ENCODE measurements at regions of chr16 and their contacts with region 1.

Region 1: GRCh38 chr16:70653809-70654771 is 7.7 kb downstream of the IL34 start:
- DNase-seq: peak; percentile 87
- H3K4me3 Mint-ChIP-seq: peak overlapping the region; percentile 54
- H3K27ac Mint-ChIP-seq: no peak overlapping the region
- H3K4me1 Mint-ChIP-seq: peaks cover 16% of the 10 kb centered on the region
- H3K27me3 Mint-ChIP-seq: no peaks in the 10 kb centered on the region
- CTCF ChIP-seq: peak; percentile 89

Region 2: GRCh38 chr16:68834550-68834949 is 1819.5 kb before region 1 on chr16:
- CTCF ChIA-PET with region 1: no interaction called
- intact Hi-C with region 1: no loop called
- DNase-seq: no peak
- H3K4me3 Mint-ChIP-seq: no peak overlapping the region
- H3K27ac Mint-ChIP-seq: no peak overlapping the region
- H3K4me1 Mint-ChIP-seq: no peaks in the 10 kb centered on the region
- H3K27me3 Mint-ChIP-seq: no peaks in the 10 kb centered on the region
- CTCF ChIP-seq: no peak

Region 3: DNA sequence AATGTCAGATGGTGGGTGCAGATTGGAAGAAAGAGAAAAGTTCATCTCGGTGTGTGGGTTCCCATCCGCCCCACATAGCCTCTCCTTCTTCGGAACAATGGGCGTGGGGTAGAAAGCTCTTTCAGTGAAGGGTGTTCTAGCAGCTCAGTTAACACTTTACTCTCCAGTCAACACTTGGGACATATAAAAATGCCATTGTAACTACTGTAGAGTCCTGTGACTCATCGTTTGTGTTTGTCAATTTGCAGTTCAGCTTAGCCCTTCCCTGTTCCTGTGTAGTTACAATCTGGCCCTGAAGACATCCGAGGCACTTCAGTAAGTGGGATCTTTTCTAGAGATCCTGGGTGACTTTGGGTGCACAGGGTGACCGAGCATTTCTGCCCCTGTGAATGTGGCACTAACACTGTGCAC is 492.0 kb before region 1 on chr16:
- CTCF ChIA-PET with region 1: no interaction called
- intact Hi-C with region 1: loop called (anchors 10 kb)
- DNase-seq: no peak
- H3K4me3 Mint-ChIP-seq: no peak overlapping the region
- H3K27ac Mint-ChIP-seq: no peak overlapping the region
- H3K4me1 Mint-ChIP-seq: peaks cover 9% of the 10 kb centered on the region
- H3K27me3 Mint-ChIP-seq: no peaks in the 10 kb centered on the region
- CTCF ChIP-seq: no peak

Region 4: DNA sequence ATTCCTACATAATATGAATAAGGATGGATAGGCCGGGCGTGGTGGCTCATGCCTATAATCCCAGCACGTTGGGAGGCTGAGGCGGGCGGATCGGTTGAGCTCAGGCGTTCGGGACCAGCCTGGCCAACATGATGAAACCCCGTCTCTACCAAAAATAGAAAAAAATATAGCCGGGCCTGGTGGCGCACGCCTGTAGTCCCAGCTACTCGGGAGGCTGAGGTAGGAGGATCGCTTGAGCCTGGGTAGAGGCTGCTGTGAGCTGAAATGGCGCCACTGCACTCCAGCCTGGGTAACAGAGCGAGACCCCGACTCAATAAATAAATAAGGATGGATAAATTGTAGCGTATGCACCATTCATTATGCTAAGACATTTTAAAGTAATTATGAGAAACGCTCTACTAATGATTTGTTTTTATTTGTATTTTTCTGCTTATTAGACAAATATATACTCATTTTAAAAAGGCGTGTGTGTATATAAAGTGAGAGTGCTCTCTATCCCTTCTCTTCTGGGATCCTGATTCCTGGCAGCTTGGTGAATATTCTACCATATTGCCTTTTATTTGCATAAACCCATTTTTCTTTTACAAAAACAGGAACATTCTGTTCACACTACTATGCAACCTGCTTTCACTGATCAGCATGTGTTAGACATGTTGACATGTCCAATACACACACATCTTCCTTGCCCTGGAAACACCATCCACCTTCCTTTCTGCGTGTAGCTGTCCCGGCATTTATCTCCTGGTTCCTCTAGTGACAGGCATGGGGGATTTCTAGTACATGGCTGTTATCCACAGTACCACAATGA is 281.0 kb before region 1 on chr16:
- CTCF ChIA-PET with region 1: interaction called, 3 read pairs
- intact Hi-C with region 1: loop called (anchors 5 kb)
- DNase-seq: no peak
- H3K4me3 Mint-ChIP-seq: no peak overlapping the region
- H3K27ac Mint-ChIP-seq: no peak overlapping the region
- H3K4me1 Mint-ChIP-seq: no peaks in the 10 kb centered on the region
- H3K27me3 Mint-ChIP-seq: no peaks in the 10 kb centered on the region
- CTCF ChIP-seq: no peak

Region 5: GRCh38 chr16:70529051-70529777 is 124.9 kb before region 1 on chr16:
- CTCF ChIA-PET with region 1: no interaction called
- intact Hi-C with region 1: loop called (anchors 5 kb)
- DNase-seq: peak; percentile 9
- H3K4me3 Mint-ChIP-seq: no peak overlapping the region
- H3K27ac Mint-ChIP-seq: no peak overlapping the region
- H3K4me1 Mint-ChIP-seq: peaks cover 29% of the 10 kb centered on the region
- H3K27me3 Mint-ChIP-seq: no peaks in the 10 kb centered on the region
- CTCF ChIP-seq: no peak

Region 6: DNA sequence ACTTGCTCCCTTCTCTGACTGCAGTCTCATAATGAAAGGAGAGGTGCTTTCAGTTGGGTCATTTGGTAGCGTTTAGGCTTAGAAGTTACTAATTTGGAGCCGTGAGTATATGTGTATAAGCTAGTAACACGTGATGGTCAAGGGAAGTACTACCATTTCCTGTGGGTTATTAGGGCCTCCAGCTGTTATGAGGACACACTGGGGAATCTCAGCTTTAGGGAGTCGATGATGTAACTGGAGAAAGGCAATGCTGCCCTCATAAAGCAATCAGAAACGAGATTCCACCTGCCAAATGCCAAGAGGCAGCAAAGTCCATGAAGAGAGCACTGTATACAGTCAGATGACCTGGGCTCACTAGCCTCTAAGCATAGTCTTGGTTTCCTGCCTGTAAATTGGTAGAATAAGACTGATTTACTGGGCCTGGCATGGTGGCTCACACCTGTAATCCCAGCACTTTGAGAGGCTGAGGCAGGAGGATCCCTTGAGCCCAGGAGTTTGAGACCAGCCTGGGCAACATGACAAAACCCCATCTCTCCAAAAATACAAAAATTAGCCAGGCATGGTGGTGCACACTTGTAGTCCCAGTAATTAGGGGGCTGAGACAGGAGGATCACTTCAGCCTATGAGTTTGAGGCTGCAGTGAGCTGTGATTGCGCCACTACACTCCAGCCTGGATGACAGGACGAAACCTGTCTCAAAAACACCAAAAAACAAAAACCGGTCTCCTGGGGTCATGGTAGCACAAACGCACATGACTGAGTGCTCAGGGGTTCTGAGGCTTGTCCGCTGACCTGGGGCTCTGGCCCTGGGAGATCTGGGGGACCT is 77.4 kb before region 1 on chr16:
- CTCF ChIA-PET with region 1: interaction called, 4 read pairs
- intact Hi-C with region 1: loop called (anchors 5 kb)
- DNase-seq: no peak
- H3K4me3 Mint-ChIP-seq: no peak overlapping the region
- H3K27ac Mint-ChIP-seq: peak overlapping the region; percentile 47
- H3K4me1 Mint-ChIP-seq: peaks cover 21% of the 10 kb centered on the region
- H3K27me3 Mint-ChIP-seq: no peaks in the 10 kb centered on the region
- CTCF ChIP-seq: no peak

Region 7: DNA sequence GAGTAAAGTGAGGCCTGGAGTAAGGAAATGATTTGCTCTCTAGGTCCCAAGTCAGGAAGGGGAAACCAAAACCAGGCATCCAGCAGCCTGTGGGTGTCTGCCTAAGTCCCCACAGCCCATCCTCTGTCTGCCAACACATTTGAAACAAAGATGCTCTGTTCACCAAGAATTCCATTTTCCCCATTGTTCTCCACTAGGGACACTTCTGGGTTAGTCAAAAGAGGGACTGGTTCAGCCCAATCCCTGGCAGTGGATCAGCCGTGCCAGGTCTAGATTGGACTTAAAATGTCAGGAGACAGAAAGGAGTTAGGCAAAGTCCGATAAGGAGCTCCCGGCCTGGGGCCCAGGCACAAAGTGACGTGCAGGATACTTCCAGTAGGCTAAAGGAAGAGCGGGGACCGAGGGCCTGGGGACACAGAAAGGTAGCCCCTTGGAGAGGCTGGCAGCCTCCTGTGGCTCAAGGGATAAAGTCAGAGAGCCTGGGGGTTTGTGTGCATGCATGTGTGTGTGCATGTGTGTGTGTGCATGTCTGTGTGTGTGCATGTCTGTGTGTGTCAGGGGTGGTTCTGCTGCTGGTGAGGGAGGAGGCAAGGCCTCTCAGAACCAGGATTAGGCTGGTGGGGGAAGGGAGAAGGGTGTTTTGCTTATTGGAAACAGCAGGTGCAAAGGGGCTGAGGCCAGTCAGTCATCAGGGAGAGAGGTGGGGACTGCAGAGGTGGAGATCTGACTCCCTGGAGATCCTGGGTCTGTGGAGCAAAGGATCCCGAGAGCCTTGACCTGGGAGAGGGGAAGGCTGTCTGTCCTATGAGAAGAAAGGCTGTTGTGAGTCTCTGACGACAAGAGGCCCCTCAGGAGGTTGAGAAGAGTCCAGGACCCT is 49.4 kb before region 1 on chr16:
- CTCF ChIA-PET with region 1: no interaction called
- intact Hi-C with region 1: loop called (anchors 10 kb)
- DNase-seq: no peak
- H3K4me3 Mint-ChIP-seq: no peak overlapping the region
- H3K27ac Mint-ChIP-seq: no peak overlapping the region
- H3K4me1 Mint-ChIP-seq: no peaks in the 10 kb centered on the region
- H3K27me3 Mint-ChIP-seq: peaks cover 17% of the 10 kb centered on the region
- CTCF ChIP-seq: no peak

Region 8: GRCh38 chr16:70770626-70771552 is 116.8 kb after region 1 on chr16:
- CTCF ChIA-PET with region 1: interaction called, 33 read pairs
- intact Hi-C with region 1: loop called (anchors 1 kb)
- DNase-seq: peak; percentile 86
- H3K4me3 Mint-ChIP-seq: no peak overlapping the region
- H3K27ac Mint-ChIP-seq: no peak overlapping the region
- H3K4me1 Mint-ChIP-seq: peaks cover 26% of the 10 kb centered on the region
- H3K27me3 Mint-ChIP-seq: no peaks in the 10 kb centered on the region
- CTCF ChIP-seq: peak; percentile 97